ENCODE measurements at regions of chr2 and their contacts with region 1.

Region 1: GRCh38 chr2:38465789-38466127 is 88.7 kb upstream of the ATL2 start:
- DNase-seq: peak in 1 of 6 donors; percentile 13
- ATAC-seq: peak in 3 of 4 donors; percentile 62 to 76 (median 63)
- H3K4me3 ChIP-seq: no peak overlapping the region
- H3K27ac ChIP-seq: no peak overlapping the region
- H3K4me1 ChIP-seq: no peaks in the 10 kb centered on the region
- H3K27me3 ChIP-seq: no peaks in the 10 kb centered on the region
- CTCF ChIP-seq: no peak

Region 2: GRCh38 chr2:38315707-38316333 is 149.9 kb before region 1 on chr2:
- intact Hi-C with region 1: loop called in 1 of 3 experiments (anchors 10 kb)
- DNase-seq: no peak
- ATAC-seq: peak in 3 of 4 donors; percentile 80 to 83 (median 81)
- H3K4me3 ChIP-seq: no peak overlapping the region
- H3K27ac ChIP-seq: no peak overlapping the region
- H3K4me1 ChIP-seq: no peaks in the 10 kb centered on the region
- H3K27me3 ChIP-seq: no peaks in the 10 kb centered on the region
- CTCF ChIP-seq: peak; percentile 24 to 55 (median 36)

Region 3: DNA sequence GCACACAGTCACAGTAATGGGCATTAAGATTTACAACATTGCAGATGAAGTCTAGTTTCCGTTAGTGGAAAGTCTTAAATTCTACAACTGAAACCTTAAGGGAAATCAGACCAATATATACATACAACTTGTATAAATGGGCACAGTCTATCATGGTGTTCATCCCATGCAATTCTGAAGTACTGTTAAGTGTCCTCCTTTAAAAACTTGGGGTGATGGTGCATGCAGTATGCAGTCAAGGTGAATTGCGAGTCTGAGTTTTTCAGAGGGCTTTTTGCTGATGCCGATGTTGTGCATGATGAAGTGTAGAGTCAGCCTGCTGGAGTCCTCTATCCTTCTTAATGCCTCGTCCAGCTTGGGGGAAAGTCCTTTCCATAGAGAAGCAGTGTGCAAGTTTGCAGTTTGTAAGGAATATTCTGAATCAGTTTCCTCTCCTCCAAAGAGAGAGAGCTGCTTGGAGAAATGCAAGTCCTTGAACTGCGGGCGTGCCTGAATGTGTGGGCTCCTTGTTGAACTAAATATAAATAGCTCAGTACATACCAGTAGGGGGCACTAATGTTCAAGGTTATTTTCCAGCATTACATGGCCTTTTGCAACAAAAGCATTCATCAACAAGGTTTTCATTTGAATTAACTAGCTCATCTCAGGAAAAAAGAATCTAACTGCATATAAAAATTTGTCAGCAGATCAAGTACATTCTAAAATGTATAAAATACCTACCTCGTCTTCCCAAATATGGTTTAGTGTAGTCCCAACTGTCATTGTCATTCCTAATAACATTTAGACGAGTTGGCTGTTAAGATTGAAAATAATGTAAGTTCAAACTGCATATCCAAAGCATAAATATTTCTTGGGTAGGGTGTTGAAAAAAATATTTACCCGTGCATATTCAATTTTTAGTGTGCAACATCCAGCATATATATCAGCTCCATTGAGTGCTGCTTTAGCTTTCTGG is 115.7 kb after region 1 on chr2:
- intact Hi-C with region 1: no loop called
- DNase-seq: peak in 2 of 6 donors; percentile 26 to 31
- ATAC-seq: peak; percentile 71 to 98 (median 94)
- H3K4me3 ChIP-seq: no peak overlapping the region
- H3K27ac ChIP-seq: no peak overlapping the region
- H3K4me1 ChIP-seq: no peaks in the 10 kb centered on the region
- H3K27me3 ChIP-seq: no peaks in the 10 kb centered on the region
- CTCF ChIP-seq: peak; percentile 13 to 55 (median 50)